ENCODE measurements at regions of chr22 and their contacts with region 1.

Region 1: GRCh38 chr22:39514373-39514973 is 5.9 kb upstream of the ATF4 start:
- DNase-seq: no peak
- ATAC-seq: peak; percentile 59
- H3K4me3 ChIP-seq: no peak overlapping the region
- H3K27ac ChIP-seq: no peak overlapping the region
- H3K4me1 ChIP-seq: peaks cover 16% of the 10 kb centered on the region
- H3K27me3 ChIP-seq: no peaks in the 10 kb centered on the region
- CTCF ChIP-seq: peak; percentile 66 to 74 (median 70)
- EP300 ChIP-seq: no peak
- POLR2A ChIP-seq: no peak
- RAD21 ChIP-seq: peak; percentile 51

Region 2: GRCh38 chr22:39343259-39344048 is 171.0 kb before region 1 on chr22:
- CTCF ChIA-PET with region 1: interaction called, 20 read pairs
- POLR2A ChIA-PET with region 1: no interaction called
- RAD21 ChIA-PET with region 1: interaction called, 3 read pairs
- SMC1A ChIA-PET with region 1: interaction called, 4 read pairs
- in situ Hi-C with region 1: no loop called
- intact Hi-C with region 1: loop called (anchors 1 kb)
- DNase-seq: peak; percentile 36
- ATAC-seq: peak; percentile 95
- H3K4me3 ChIP-seq: no peak overlapping the region
- H3K27ac ChIP-seq: no peak overlapping the region
- H3K4me1 ChIP-seq: no peaks in the 10 kb centered on the region
- H3K27me3 ChIP-seq: peaks cover 0 to 1% of the 10 kb centered on the region in 2 experiments; a peak in 2 of 4 replicates
- CTCF ChIP-seq: peak; percentile 77 to 89 (median 80)
- EP300 ChIP-seq: no peak
- POLR2A ChIP-seq: no peak
- RAD21 ChIP-seq: peak; percentile 72

Region 3: DNA sequence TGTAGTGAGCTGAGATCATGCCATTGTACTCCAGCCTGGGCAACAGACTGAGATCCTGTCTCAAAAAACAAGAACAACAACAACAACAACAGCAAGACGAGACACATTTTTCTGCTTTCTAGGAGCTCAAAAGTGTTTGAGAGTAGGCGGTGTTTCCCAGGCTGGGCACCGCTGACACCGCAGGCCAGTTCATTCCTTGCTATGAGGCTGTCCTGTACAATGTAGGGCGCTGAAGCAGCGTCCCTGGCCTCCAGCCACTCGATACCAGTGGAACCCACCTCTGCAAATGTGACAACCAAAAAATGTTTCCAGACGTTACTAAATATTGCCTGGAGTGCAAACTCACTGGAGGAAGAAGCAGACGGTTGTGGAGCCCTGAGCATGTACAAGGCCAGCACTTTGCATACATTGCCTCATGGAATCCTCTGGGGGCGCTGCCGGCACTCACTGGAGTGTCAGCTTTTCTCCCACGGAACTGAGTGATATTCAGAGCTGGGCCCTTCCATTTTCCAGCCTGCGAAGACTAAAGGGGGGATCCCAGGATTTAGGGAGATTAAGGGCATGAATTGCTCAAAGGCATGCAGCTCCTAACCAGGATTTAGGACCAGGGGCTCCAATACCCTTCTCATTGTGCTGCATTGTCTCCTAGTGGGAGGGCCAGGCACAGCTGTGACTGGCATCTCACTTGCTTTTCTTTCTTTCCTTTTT is 18.2 kb before region 1 on chr22:
- CTCF ChIA-PET with region 1: interaction called, 372 read pairs
- POLR2A ChIA-PET with region 1: interaction called, 6 read pairs
- RAD21 ChIA-PET with region 1: interaction called, 7 read pairs
- SMC1A ChIA-PET with region 1: interaction called, 7 read pairs
- in situ Hi-C with region 1: no loop called
- intact Hi-C with region 1: no loop called
- DNase-seq: no peak
- ATAC-seq: peak; percentile 93
- H3K4me3 ChIP-seq: no peak overlapping the region
- H3K27ac ChIP-seq: no peak overlapping the region
- H3K4me1 ChIP-seq: no peaks in the 10 kb centered on the region
- H3K27me3 ChIP-seq: no peaks in the 10 kb centered on the region
- CTCF ChIP-seq: peak; percentile 68 to 86 (median 82)
- EP300 ChIP-seq: no peak
- POLR2A ChIP-seq: no peak
- RAD21 ChIP-seq: peak; percentile 42

Region 4: DNA sequence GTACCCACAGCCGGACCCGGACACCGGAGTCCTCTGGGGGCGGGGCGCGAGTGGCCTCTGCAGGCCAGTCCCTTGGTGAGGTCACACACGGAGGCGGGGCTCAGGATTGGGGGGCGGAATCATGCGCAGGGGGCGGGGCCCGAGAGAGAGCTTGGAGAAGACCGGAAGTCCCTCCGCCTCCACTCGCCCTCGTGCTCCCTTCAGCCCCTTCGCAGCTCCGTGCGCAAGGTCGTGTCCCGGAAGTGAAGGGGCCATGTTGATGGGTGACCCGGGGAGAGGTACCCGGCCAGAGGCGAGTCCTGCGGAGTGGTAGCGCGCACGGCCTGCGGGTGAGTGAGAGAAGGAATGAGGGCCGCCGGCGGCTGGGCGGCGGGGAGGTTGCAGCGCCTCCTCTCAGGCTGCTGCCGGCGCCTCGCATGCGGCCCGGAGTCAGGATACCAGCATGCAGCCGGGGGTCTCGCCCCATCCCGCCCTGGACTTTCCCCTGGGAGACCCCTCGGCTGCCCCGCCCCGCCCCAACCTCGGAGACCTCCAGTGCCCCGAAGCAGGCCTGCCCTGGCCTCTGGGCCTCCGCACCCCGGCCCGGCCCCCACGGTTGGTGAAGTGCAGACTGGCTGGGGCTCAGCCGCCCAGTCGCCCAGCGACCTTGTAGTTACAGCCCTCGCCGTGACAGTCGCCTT is 12.2 kb before region 1 on chr22 and contains the start of gene MIEF1:
- CTCF ChIA-PET with region 1: interaction called, 372 read pairs
- POLR2A ChIA-PET with region 1: interaction called, 9 read pairs
- RAD21 ChIA-PET with region 1: interaction called, 9 read pairs
- SMC1A ChIA-PET with region 1: interaction called, 6 read pairs
- in situ Hi-C with region 1: no loop called
- intact Hi-C with region 1: no loop called
- DNase-seq: peak; percentile 87
- ATAC-seq: peak; percentile 99
- H3K4me3 ChIP-seq: peak within 1 kb of the TSS; percentile 95
- H3K27ac ChIP-seq: peak within 1 kb of the TSS; percentile 73
- H3K4me1 ChIP-seq: 0 out of 2 replicates have a peak, but pooled peaks cover 5% of the 10 kb centered on the region
- H3K27me3 ChIP-seq: no peaks in the 10 kb centered on the region
- CTCF ChIP-seq: no peak
- EP300 ChIP-seq: no peak
- POLR2A ChIP-seq: peak; percentile 94
- RAD21 ChIP-seq: no peak
- polyA plus RNA-seq, gene MIEF1: 12.4 to 13.8 TPM